ENCODE measurements at regions of chr14 and their contacts with region 1.

Region 1: DNA sequence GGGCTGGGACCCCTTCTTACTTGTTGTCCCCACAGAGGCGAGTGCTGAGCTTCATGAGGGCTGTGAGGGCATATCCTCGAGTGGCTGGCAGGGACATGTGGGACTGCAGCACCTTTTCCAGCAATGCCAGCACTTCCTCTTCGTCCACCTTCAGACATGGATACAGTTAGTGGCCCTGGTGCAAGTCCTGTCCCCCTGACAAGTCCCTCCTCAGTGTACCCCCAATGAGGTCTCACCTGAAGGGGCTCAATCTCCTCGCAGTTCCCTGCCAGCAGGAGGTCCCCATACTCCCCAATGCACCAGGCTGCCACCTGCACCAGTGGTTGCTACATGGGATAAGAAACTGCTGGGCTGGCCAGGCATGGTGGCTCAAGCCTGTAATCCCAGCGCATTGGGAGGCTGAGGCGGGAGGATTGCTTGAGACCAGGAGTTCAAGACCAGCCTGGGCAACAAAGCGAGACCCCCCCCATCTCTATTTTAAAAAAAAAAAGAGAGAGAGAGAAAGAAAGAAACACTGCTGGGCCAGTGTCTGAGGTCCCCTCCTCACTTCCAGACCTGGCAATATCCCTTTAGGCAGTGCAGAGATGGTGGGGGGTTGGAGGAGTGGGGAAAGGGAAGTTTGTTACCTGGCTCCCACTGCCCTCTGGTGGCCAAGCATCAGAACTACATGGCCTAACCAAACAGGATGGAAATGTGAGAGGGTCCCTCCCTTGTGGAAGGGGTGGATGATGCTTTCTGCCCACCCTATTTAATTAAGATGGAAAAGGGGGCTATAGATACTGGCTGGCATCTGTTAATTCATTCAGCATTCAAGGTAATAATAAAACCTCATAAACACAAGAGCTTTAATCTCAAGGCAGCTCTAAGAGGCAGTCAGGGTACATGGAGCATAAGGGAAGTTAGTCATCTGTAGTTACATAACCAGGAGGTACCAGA is 5.1 kb downstream of the AP1G2 start:
- DNase-seq: peak; percentile 69

Region 2: DNA sequence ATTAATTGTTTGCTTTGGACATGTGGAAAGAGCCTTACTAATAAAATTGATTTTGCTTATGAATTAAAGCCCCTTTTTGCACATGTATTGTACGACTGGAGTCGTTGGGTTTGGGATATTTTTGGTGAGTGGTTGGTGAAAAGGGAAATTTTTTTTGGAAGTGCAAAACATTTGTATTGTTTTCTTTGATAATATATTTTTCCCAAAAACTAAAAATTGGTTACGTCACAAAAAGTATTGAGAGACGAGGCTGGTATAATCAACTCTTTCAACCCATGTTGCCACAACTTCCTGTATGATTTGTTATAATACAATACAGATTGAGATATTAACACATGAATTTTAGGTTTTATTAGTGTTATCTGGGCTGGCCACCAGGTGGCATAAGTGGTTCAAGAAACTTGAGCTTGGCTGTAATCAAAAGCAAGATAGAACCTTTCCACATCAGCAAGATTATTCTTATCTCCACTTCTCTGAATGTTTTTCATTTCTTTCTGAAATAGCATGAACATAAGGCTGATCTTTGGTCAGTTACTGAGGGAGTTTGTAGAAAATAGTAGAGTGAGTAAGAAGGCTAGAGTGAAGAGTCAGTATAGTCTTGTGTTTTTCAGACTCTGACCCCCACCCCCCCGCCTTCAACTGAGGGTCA is 84.3 kb before region 1 on chr14:
- CTCF ChIA-PET with region 1: interaction called, 53 read pairs
- POLR2A ChIA-PET with region 1: interaction called, 11 read pairs
- DNase-seq: peak; percentile 47